ENCODE measurements at regions of chr15 and their contacts with region 1.

Region 1: DNA sequence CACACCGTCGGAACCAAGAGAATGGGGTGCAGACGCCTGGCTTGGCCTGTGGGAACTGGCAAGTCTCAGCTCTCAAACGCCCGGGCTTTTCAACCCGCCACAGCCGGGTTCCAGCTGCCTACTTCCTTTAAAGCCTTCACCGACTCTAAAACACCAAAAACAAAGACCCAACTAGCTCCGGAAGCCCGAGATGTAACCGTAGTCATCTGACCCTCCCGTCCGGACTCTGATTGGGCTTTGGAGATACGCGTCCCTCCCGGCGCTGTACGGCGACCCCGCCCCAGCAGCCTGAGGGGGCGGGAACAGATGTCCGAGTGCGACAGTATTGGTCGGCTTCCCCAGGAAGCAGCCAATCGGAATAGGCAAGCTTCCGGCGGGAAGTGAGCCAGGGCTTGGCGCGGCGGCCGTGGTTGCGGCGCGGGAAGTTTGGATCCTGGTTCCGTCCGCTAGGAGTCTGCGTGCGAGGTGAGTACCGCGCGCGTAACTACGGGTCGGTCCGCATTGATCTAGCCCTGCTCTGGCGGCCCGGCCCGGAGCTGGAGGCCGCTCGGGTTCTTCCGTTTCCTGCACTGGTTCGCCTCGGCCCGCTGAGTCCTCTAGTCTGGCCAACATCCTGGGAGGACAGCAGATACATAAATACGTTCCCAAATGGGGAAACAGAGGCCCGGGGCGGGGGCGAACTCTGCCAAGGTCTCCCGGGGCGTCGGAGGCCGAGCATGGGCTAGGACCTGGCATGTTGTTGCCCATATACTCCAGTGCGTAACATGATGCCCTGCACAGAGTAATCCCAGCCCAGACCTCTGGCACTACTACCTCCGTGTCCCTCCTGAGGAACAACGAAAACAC is at the start of gene BLM:
- DNase-seq: peak; percentile 98
- ATAC-seq: peak; percentile 100
- H3K4me3 ChIP-seq: peak within 1 kb of the TSS; percentile 86 to 98 (median 97)
- H3K4me3 Mint-ChIP-seq: peak within 1 kb of the TSS; percentile 94
- H3K27ac ChIP-seq: peak within 1 kb of the TSS; percentile 81 to 89
- H3K27ac Mint-ChIP-seq: peak within 1 kb of the TSS; percentile 94
- H3K4me1 ChIP-seq: peaks cover 15 to 16% of the 10 kb centered on the region in 2 donors
- H3K4me1 Mint-ChIP-seq: peaks cover 28% of the 10 kb centered on the region
- H3K27me3 ChIP-seq: no peaks in the 10 kb centered on the region
- H3K27me3 Mint-ChIP-seq: no peaks in the 10 kb centered on the region
- CTCF ChIP-seq: peak; percentile 30
- total RNA-seq, gene BLM: 17.4 and 17.8 TPM in 2 replicates

Region 2: GRCh38 chr15:90265271-90266060 is 451.7 kb before region 1 on chr15 and contains the start of gene NGRN:
- CTCF ChIA-PET with region 1: no interaction called
- POLR2A ChIA-PET with region 1: no interaction called
- intact Hi-C with region 1: loop called (anchors 2 kb)
- DNase-seq: peak; percentile 97
- ATAC-seq: peak; percentile 86
- H3K4me3 ChIP-seq: peak within 1 kb of the TSS; percentile 69 to 83 (median 79)
- H3K4me3 Mint-ChIP-seq: peak within 1 kb of the TSS; percentile 95
- H3K27ac ChIP-seq: peak within 1 kb of the TSS; percentile 95 to 99
- H3K27ac Mint-ChIP-seq: peak within 1 kb of the TSS; percentile 98
- H3K4me1 ChIP-seq: peaks cover 36 to 38% of the 10 kb centered on the region in 2 donors
- H3K4me1 Mint-ChIP-seq: peaks cover 52% of the 10 kb centered on the region
- H3K27me3 ChIP-seq: no peaks in the 10 kb centered on the region
- H3K27me3 Mint-ChIP-seq: no peaks in the 10 kb centered on the region
- CTCF ChIP-seq: no peak
- total RNA-seq, gene NGRN: 42.6 and 45.5 TPM in 2 replicates

Region 3: DNA sequence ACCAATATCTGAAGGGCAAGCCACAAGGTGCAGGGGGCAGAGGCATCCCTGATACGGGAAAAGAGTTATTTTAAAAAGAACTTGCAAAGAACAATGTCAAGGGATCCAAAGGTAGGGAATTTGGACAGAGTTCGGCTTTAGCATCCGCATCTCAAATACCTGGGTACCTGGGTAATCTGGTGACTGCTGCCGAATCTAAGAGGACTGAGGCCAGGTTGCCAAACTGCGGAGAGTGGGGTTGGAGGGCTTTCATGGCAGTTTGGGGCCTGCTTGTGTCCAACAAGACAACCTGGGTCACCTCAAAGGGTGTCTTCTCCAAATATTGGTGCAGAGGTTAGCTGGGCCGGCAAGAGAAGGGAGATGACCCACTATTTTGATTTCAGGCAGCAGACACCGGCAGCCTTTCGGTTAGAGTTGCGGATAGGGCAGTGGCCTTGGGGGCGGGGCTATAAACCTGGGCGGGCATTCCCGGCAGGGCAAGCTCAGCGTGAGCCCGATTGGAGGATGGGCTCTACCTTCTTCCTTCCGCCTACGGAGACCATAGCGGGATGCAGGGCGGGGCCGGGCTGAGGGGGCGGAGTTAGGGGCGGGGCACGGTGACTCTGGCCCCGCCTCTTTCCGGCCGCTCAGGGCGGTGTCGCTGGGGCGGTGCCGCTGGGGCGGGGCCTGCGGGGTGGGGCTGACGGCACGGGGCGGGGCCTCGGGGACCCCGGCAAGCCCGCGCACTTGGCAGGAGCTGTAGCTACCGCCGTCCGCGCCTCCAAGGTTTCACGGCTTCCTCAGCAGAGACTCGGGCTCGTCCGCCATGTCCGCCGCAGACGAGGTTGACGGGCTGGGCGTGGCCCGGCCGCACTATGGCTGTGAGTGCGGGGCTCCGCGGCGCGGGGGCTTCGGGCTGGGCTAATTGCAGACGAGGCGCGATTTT is 329.4 kb before region 1 on chr15 and contains the start of gene IQGAP1:
- CTCF ChIA-PET with region 1: no interaction called
- POLR2A ChIA-PET with region 1: no interaction called
- intact Hi-C with region 1: loop called (anchors 1 kb)
- DNase-seq: peak; percentile 97
- ATAC-seq: peak; percentile 86
- H3K4me3 ChIP-seq: peak within 1 kb of the TSS; percentile 72 to 93 (median 87)
- H3K4me3 Mint-ChIP-seq: peak within 1 kb of the TSS; percentile 92
- H3K27ac ChIP-seq: peak within 1 kb of the TSS; percentile 91 to 95
- H3K27ac Mint-ChIP-seq: peak within 1 kb of the TSS; percentile 99
- H3K4me1 ChIP-seq: peaks cover 22 to 26% of the 10 kb centered on the region in 2 donors
- H3K4me1 Mint-ChIP-seq: peaks cover 36% of the 10 kb centered on the region
- H3K27me3 ChIP-seq: no peaks in the 10 kb centered on the region
- H3K27me3 Mint-ChIP-seq: no peaks in the 10 kb centered on the region
- CTCF ChIP-seq: no peak
- total RNA-seq, gene IQGAP1: 216 and 233 TPM in 2 replicates

Region 4: DNA sequence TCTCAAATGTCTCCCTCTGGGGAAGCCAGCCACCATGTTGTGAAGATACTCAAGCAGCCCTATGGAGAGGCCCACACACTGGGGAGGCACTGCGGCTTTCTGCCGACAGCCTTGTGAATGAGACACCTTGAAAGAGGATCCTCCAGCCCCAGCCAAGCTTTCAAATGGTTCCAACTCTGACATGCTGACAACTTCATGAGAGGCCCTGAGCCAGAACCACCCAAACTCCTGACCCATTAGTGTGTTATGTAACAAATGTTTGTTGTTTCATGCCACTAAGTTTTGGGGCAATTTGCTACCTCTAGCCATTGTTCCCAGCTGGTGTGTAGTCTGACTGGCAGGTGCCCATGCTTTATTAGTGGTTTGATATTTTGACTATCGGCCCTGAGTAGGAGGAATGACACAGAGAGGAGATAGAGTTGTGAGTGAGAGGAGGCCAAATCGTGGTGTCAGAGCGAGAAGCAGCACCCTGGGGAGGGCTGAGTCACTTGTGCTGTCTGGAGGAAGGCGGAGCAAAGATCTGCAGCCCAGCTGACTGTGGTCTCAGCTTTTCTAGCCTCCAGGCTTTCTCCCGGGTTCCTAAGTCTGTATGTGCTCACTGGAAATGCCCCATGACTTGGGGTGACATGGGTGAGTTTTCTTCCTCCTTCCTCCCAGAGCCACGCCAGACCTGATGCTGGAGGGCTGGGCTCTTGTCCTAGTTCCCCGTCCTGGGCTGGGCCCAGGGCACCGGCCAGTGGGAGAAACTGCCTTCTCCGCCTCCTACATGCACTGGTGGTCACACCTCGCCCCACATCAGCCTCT is 56.8 kb before region 1 on chr15:
- CTCF ChIA-PET with region 1: no interaction called
- POLR2A ChIA-PET with region 1: no interaction called
- intact Hi-C with region 1: loop called (anchors 1 kb)
- DNase-seq: peak; percentile 58
- ATAC-seq: peak; percentile 82
- H3K4me3 ChIP-seq: peak overlapping the region; percentile 7 to 55 (median 30)
- H3K4me3 Mint-ChIP-seq: peak overlapping the region; percentile 66
- H3K27ac ChIP-seq: no peak overlapping the region
- H3K27ac Mint-ChIP-seq: peak overlapping the region; percentile 43
- H3K4me1 ChIP-seq: peaks cover 80 to 88% of the 10 kb centered on the region in 2 donors
- H3K4me1 Mint-ChIP-seq: peaks cover 76% of the 10 kb centered on the region
- H3K27me3 ChIP-seq: peaks cover 0 to 49% (median 29%) of the 10 kb centered on the region in 4 experiments
- H3K27me3 Mint-ChIP-seq: peaks cover 39% of the 10 kb centered on the region
- CTCF ChIP-seq: no peak

Region 5: GRCh38 chr15:90869601-90870353 is 152.6 kb after region 1 on chr15:
- CTCF ChIA-PET with region 1: no interaction called
- POLR2A ChIA-PET with region 1: no interaction called
- intact Hi-C with region 1: loop called (anchors 5 kb)
- DNase-seq: peak; percentile 50
- ATAC-seq: peak; percentile 59
- H3K4me3 ChIP-seq: peak overlapping the region in 1 of 5 experiments; percentile 18
- H3K4me3 Mint-ChIP-seq: peak overlapping the region; percentile 92
- H3K27ac ChIP-seq: peak overlapping the region; percentile 19 to 32
- H3K27ac Mint-ChIP-seq: peak overlapping the region; percentile 95
- H3K4me1 ChIP-seq: peaks cover 31 to 39% of the 10 kb centered on the region in 2 donors
- H3K4me1 Mint-ChIP-seq: peaks cover 41% of the 10 kb centered on the region
- H3K27me3 ChIP-seq: no peaks in the 10 kb centered on the region
- H3K27me3 Mint-ChIP-seq: no peaks in the 10 kb centered on the region
- CTCF ChIP-seq: no peak

Measured in B cell (primary cell).